Adrenal gland (tissue), 19 donors: ENCODE measurements at regions of chr15 and their contacts with region 1.

Region 1: DNA sequence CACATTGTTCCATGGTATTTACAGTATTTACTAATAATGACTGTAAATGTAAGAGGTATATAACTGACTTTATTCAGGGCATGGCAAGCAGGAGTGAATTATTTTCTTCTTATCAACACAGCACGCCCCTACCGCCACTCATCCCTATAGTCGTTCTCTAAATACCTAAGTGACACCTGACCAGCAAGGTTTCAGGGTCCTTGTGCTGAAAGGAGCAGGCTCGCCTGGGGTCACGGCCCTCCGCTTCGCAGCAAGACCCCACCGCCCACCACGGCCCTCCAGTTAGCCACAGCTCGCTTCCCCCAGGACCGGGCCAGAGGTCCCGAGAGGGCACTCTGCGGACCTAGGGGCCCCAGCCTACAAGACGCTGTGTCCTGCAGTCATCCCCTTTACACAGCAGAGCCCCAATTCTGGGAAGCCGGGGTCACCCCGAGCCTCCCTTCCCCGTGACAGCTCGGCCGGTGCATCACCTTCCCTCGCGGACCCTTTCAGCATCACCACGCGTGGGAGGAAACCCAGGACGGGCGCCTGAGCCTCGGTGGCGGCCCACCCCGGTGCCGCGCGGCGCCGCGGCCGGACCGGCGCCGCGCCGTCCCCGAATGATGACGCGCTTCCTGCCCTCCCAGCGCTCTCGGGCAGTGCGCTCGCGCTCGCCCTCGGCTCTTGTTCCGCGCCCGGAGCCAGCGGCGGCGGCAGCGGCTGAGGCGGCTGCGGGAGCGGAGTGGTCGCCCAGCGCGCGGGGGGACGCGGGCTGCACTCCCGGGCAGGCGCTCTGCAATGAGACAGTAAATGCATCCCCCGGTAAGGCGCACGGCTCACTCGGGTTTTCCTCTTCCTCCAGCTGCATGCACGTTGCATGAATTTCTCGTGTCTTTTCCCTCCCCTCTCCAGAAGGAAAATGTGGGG is 225.1 kb upstream of the C2CD4B start:
- DNase-seq: peak; percentile 49 to 70 (median 65)
- H3K4me3 ChIP-seq: peak within 1 kb of the TSS; percentile 82 to 96 (median 88)
- H3K27ac ChIP-seq: peak within 1 kb of the TSS in 4 of 5 donors; percentile 39 to 83 (median 64)
- H3K4me1 ChIP-seq: peaks cover 12 to 13% of the 10 kb centered on the region in 2 donors
- H3K27me3 ChIP-seq: no peaks in the 10 kb centered on the region
- CTCF ChIP-seq: no peak
- POLR2A ChIP-seq: peak; percentile 77 to 85

Region 2: GRCh38 chr15:62742409-62743171 is 352.5 kb after region 1 on chr15:
- intact Hi-C with region 1: loop called in 1 of 2 experiments (anchors 5 kb)
- DNase-seq: peak; percentile 38 to 74 (median 54)
- H3K4me3 ChIP-seq: peak overlapping the region in 1 of 4 donors; percentile 30
- H3K27ac ChIP-seq: peak overlapping the region in 2 of 5 donors; percentile 13 to 64
- H3K4me1 ChIP-seq: peaks cover 0 to 4% of the 10 kb centered on the region in 2 donors
- H3K27me3 ChIP-seq: no peaks in the 10 kb centered on the region
- CTCF ChIP-seq: peak; percentile 57 to 90 (median 72)
- POLR2A ChIP-seq: no peak